ENCODE measurements at regions of chr9 and their contacts with region 1.

Region 1: GRCh38 chr9:875119-875962 is 33.8 kb downstream of the DMRT1 start:
- DNase-seq: no peak
- H3K4me3 ChIP-seq: no peak overlapping the region
- CTCF ChIP-seq: no peak

Region 2: GRCh38 chr9:942805-943580 is 67.7 kb after region 1 on chr9:
- in situ Hi-C with region 1: loop called (anchors 5 kb)
- DNase-seq: no peak
- H3K4me3 ChIP-seq: no peak overlapping the region
- CTCF ChIP-seq: no peak

Measured in astrocyte of the cerebellum (primary cell).